Thyroid gland (tissue), 4 donors: ENCODE measurements at regions of chr12 and their contacts with region 1.

Region 1: DNA sequence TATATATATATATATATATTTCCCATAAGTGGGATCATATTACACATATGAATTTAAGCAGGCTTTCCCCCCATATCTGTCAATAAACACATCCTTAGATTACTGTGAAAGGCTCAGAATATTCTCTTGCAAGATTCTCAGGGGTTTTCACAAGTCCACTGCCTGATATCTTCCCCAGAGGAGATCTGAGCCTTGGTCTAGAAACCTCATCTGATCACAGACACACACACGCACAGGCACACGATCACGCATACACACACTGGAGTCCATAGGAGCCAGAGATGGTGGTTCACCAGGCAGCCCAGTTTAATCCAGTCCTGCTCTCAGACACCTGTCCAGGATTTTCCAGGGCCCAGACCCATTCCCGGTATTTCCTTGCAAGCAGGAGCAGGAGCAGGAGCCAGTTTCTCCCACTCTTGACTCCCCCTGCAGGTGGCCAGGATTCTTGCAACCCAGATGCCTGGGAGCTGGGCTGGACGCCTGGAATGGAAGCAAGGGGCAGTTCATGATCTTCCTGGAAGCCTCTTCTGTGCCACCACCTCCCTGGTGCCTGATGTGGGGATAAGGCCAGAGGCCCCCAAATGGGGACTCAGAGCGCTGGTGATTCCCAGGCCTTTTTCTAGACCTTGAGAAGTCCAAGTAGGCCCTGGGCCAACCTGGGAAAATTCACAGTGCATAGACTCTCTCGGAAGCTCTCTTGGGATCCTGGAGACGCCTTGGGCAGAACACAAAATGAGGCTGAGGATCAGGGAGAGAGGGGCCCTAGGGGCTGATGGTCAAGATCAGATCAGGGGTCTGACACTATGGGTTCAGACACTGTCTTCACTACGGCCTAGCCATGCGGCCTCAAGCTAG is 16.5 kb upstream of the KRT78 start:
- DNase-seq: peak; percentile 70 to 82
- H3K4me3 ChIP-seq: no peak overlapping the region
- H3K27ac ChIP-seq: no peak overlapping the region
- H3K4me1 ChIP-seq: peaks cover 0 to 13% of the 10 kb centered on the region in 2 donors
- H3K27me3 ChIP-seq: no peaks in the 10 kb centered on the region
- CTCF ChIP-seq: peak; percentile 61 to 85 (median 80)
- POLR2A ChIP-seq: no peak

Region 2: DNA sequence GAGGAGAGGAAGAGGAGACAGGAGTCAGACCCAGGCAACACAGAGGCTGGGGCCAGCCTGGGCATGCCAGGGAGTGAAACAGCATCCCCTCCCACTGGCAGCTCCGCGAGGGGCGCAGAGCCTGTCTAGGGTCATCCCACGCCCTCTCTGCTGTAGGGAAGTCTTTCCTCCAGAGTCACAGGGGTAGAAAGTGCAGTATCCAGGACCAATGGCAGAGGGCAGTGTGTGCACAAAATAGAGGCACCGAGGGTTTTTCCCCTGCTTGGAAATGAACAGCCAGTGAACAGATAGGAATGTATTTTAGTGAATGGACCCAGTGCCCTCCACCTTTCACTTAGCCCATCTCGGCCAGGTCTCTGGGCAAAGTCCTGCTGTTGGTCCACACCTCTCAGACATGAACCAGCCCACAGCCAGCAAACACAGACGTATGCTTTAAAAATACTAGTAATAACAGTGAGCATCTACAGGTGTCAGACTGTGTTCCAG is 282.3 kb before region 1 on chr12:
- intact Hi-C with region 1: loop called (anchors 5 kb)
- DNase-seq: peak; percentile 61 to 63
- H3K4me3 ChIP-seq: no peak overlapping the region
- H3K27ac ChIP-seq: no peak overlapping the region
- H3K4me1 ChIP-seq: peaks cover 8 to 18% of the 10 kb centered on the region in 2 donors
- H3K27me3 ChIP-seq: no peaks in the 10 kb centered on the region
- CTCF ChIP-seq: peak in 5 of 6 experiments; percentile 32 to 71 (median 63)
- POLR2A ChIP-seq: no peak

Region 3: DNA sequence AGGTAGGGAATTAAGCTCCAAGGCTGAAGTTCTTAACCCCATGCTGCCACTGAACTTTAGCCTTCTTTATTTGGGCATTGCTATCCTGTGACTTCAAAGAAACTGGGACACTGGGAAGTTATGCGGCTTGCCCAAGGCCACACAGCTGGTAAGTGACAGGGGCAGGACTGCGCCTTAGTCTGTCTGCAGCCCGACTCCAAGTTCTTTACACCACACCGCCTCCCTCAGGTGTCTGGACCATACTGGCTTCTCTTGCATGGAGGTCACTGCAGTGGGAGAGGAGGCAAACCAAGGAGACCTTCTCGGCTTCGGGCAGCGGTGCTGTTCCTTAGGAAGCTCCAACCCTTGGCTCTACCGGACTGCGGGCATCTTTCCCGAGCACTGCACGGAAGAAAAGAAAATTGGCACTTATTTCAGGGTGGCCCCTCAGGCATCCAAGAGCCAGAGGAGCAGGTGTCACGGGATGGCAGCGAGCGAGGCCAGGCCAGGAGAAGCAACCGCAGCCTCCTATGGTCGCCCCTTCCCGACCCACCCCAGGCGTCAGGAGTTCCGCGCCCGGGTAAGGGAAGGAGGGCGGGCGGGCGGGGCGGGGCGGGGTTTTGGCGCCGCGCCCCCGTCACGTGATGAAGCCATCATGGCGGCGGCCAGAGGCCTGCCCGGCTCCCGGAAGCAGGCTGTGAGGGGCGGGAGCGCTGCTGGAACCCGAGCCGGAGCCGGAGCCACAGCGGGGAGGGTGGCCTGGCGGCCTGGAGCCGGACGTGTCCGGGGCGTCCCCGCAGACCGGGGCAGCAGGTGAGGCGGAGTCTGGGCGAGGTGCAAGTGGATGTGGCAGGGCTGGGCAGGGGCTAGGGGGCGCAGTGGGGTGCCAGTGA is 386.4 kb after region 1 on chr12:
- intact Hi-C with region 1: no loop called
- DNase-seq: peak; percentile 75 to 79
- H3K4me3 ChIP-seq: peak overlapping the region; percentile 74 to 91 (median 82)
- H3K27ac ChIP-seq: peak overlapping the region; percentile 81 to 91 (median 86)
- H3K4me1 ChIP-seq: peaks cover 17 to 18% of the 10 kb centered on the region in 2 donors
- H3K27me3 ChIP-seq: no peaks in the 10 kb centered on the region
- CTCF ChIP-seq: peak in 4 of 6 experiments; percentile 24 to 53 (median 44)
- POLR2A ChIP-seq: peak in 1 of 2 donors; percentile 53